Naive thymus-derived CD8-positive, alpha-beta T cell (primary cell): ENCODE measurements at regions of chr17 and their contacts with region 1.

Region 1: GRCh38 chr17:38853292-38854219 is at the start of gene RPL23:
- DNase-seq: peak; percentile 74 to 95 (median 89)
- ATAC-seq: peak; percentile 80 to 82
- H3K4me3 Mint-ChIP-seq: peak within 1 kb of the TSS; percentile 94 to 99 (median 96)
- H3K27ac Mint-ChIP-seq: peak within 1 kb of the TSS; percentile 98 to 100 (median 99)
- H3K4me1 Mint-ChIP-seq: peaks cover 29 to 47% (median 44%) of the 10 kb centered on the region in 4 donors
- H3K27me3 Mint-ChIP-seq: no peaks in the 10 kb centered on the region
- polyA plus RNA-seq, gene RPL23: 1,506 to 1,897 (median 1,688) TPM

Region 2: DNA sequence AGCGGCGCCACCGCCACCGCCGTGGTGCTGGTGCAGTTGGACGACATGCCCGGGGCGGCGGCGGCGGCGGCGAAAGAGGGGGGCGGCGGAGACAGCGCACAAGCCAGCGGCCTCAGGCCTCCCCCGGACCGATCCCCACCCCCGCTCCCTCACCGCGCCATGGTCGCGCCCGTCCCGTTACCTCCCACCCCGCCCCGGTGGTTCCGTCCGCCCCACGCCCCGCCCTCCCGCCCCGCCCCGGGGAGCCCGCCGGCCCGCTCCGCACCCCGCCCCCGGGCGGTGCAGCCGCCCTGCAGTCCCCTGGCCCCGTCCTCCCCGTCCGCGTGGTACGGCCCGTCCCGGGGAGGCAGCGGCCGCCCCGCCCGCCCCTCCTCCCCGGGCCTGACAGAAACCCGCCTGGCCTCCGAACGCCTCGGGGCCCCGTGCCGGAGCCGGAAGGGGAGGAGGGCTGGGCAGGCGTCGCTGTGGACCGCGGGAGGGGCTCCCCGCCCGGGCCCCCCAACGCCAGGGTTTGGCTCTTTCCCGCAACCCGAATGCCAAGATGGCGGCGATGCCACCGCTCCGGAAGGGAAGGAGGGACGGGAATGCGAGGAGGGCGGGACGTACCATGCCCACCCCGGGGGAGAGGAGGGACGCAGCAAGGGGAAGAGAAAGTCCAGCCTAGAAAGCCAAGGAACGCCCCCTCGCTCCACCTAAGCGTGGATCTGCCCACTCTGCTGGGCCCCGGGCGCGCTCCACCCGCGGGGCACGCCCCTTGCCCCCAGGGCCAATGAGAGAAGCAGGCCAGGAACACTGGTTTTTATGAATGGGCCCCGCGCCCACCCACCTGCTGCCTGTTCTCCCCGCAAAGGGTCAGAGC is 53.9 kb before region 1 on chr17 and contains the start of gene PIP4K2B:
- POLR2A ChIA-PET with region 1: interaction called, 10 read pairs
- DNase-seq: peak; percentile 69 to 90 (median 80)
- ATAC-seq: peak; percentile 76
- H3K4me3 Mint-ChIP-seq: peak within 1 kb of the TSS; percentile 87 to 98 (median 94)
- H3K27ac Mint-ChIP-seq: peak within 1 kb of the TSS; percentile 81 to 96 (median 94)
- H3K4me1 Mint-ChIP-seq: peaks cover 31 to 44% (median 43%) of the 10 kb centered on the region in 4 donors
- H3K27me3 Mint-ChIP-seq: no peaks in the 10 kb centered on the region
- polyA plus RNA-seq, gene PIP4K2B: 11.8 to 17.8 (median 16.5) TPM

Region 3: DNA sequence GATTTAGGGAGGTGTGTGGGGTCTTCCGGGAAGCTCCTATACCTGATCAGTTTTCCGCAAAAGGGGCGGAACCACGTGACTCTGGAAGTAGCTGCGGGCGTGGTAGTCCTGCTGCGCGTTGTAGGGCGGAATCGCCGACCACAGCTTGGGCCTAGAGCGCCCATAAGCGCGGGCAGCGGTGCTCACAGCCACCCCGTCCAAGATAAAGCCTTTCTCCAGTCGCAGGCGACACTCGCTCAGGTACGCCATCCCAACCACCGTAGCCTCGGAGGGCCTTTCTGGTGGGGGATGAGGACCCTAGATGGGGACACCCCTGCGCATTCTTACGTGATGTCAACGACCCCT is 12.4 kb before region 1 on chr17:
- POLR2A ChIA-PET with region 1: interaction called, 13 read pairs
- DNase-seq: peak in 1 of 10 donors; percentile 20
- ATAC-seq: peak; percentile 16 to 64
- H3K4me3 Mint-ChIP-seq: peak overlapping the region in 8 of 10 donors; percentile 19 to 81 (median 62)
- H3K27ac Mint-ChIP-seq: peak overlapping the region in 4 of 10 donors; percentile 44 to 84 (median 72)
- H3K4me1 Mint-ChIP-seq: no peaks in the 10 kb centered on the region
- H3K27me3 Mint-ChIP-seq: no peaks in the 10 kb centered on the region

Region 4: GRCh38 chr17:38879878-38880682 is 26.5 kb after region 1 on chr17:
- POLR2A ChIA-PET with region 1: interaction called, 12 read pairs
- DNase-seq: peak in 3 of 10 donors; percentile 54 to 70 (median 54)
- ATAC-seq: peak; percentile 24 to 30
- H3K4me3 Mint-ChIP-seq: peak overlapping the region; percentile 56 to 89 (median 79)
- H3K27ac Mint-ChIP-seq: peak overlapping the region; percentile 72 to 96 (median 92)
- H3K4me1 Mint-ChIP-seq: peaks cover 59 to 95% (median 90%) of the 10 kb centered on the region in 4 donors
- H3K27me3 Mint-ChIP-seq: no peaks in the 10 kb centered on the region

Region 5: DNA sequence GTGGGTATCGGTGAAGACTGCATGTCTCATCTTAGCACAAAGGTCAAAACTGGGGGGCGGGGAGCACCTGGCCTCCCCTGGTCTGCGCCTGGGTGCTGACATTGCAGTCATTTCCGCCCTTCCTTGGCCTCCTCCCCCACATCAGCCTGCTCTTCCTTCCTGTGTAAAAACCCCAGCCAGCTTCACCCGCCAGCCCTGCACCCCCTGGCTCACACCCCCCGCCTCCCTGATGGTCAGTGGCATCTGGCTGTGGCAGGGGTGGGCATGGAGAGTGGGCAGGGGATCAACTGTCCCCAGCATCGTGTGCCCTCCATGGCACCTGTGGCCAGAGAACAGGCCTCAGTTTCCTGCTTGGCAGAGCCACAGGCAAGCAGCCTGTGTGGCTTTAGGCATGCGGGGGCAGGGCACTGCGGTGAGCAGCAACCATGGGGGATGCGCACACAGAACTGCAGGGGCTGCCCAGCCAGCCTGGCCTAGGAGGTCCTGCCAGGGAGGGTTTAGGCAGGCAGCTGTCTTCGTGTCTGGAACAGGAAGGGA is 45.3 kb after region 1 on chr17:
- POLR2A ChIA-PET with region 1: interaction called, 40 read pairs
- DNase-seq: peak; percentile 54 to 90 (median 76)
- ATAC-seq: peak; percentile 81 to 90
- H3K4me3 Mint-ChIP-seq: peak overlapping the region; percentile 74 to 93 (median 84)
- H3K27ac Mint-ChIP-seq: peak overlapping the region; percentile 92 to 100 (median 97)
- H3K4me1 Mint-ChIP-seq: peaks cover 22 to 84% (median 70%) of the 10 kb centered on the region in 4 donors
- H3K27me3 Mint-ChIP-seq: no peaks in the 10 kb centered on the region

Region 6: GRCh38 chr17:39099663-39100286 is 246.2 kb after region 1 on chr17:
- POLR2A ChIA-PET with region 1: no interaction called
- DNase-seq: no peak
- ATAC-seq: no peak
- H3K4me3 Mint-ChIP-seq: peak overlapping the region in 3 of 10 donors; percentile 24 to 51 (median 37)
- H3K27ac Mint-ChIP-seq: peak overlapping the region in 7 of 10 donors; percentile 24 to 89 (median 70)
- H3K4me1 Mint-ChIP-seq: peaks cover 46 to 76% (median 74%) of the 10 kb centered on the region in 4 donors
- H3K27me3 Mint-ChIP-seq: no peaks in the 10 kb centered on the region